ENCODE measurements at regions of chr10 and their contacts with region 1.

Region 1: DNA sequence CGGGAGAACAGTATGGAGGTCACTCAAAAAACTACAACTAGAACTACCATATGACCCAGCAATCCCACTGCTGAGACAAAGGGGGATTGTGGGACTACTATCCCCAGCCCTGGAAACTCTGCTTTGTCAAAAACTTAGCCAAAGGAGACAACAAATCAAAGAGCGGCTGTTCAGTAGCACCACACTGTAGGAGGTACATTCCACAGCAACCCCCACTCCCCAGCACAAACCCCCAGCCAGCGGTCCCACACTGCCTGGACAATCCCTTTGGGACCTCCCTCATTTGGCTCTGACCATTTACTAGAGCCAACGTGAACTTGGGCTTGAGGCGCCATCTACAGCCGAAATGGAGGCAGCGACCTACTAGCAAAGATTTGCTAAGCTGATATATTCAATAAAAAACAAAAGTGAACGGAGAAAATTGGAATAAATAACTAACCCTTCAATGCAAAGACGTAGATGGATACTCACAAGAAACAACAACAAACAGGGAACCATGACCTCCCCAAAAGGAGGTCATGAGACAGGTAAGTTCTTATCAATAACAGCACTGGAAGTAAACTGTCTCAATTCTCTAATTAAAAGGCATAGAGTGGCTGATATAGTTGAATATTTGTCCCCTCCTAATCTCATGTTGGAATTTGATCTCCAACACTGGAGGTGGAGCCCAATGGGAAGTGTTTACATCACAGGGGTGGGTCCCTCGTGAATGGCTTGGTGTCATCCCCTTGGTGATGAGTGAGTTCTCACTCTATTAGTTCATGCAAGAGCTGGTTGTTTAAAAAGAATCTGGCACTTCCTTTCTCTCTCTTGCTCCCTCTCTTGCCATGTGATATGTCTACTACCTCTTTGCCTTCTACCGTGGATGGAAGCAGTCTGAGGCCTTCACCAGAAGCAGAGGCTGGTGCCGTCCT is 119.0 kb upstream of the KCNMA1 start:
- DNase-seq: peak; percentile 98
- ATAC-seq: peak; percentile 97
- H3K4me3 ChIP-seq: no peak overlapping the region
- H3K27ac ChIP-seq: no peak overlapping the region
- H3K4me1 ChIP-seq: peaks cover 3% of the 10 kb centered on the region; the same call in 1 of the 2 replicates
- H3K27me3 ChIP-seq: no peaks in the 10 kb centered on the region
- CTCF ChIP-seq: peak; percentile 100

Region 2: GRCh38 chr10:77710759-77711682 is 45.6 kb before region 1 on chr10:
- CTCF ChIA-PET with region 1: interaction called, 30 read pairs
- POLR2A ChIA-PET with region 1: no interaction called
- intact Hi-C with region 1: loop called (anchors 1 kb)
- DNase-seq: peak; percentile 97
- ATAC-seq: peak; percentile 98
- H3K4me3 ChIP-seq: peak overlapping the region; percentile 57
- H3K27ac ChIP-seq: no peak overlapping the region
- H3K4me1 ChIP-seq: peaks cover 10% of the 10 kb centered on the region; the same call in 1 of the 2 replicates
- H3K27me3 ChIP-seq: no peaks in the 10 kb centered on the region
- CTCF ChIP-seq: peak; percentile 100

Region 3: DNA sequence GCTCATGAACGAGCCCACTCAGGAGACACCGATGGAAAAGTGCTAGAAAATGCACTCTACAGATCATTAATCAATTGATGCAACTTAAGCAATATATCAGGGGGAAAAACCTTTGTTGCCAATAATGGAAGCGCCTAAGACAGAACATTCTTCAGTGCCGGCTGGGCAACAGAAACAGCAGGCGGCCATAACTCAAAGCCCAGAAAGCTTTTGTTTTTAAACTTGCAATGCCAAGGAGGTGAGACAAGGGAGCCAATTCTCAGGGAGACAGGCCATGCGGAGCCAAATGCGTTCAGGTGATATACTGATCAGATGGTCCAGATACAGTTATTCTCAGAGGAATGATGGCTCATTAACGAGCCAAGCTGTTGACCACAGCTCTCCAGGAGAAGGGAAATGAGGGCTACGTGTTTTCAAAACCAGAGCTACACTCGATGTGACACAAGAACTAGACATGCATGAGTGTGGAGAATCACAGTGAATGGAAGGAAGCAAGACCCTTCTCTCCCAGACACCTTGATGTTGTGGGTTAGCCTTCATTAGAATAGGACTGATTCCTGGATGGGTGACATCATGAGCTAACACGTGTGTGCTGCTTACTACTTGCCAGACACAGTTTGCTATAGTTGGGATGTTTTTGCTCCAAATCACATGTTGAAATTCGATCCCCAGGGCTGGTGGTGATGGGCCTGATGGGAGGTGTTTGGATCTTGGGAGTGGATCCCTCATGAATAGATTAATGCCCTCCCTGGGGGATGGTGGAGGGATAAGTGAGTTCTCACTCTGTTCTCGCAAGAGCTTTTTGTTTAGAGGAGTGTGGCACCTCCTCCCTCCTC is 39.9 kb before region 1 on chr10:
- CTCF ChIA-PET with region 1: interaction called, 30 read pairs
- POLR2A ChIA-PET with region 1: interaction called, 32 read pairs
- intact Hi-C with region 1: loop called (anchors 1 kb)
- DNase-seq: no peak
- ATAC-seq: no peak
- H3K4me3 ChIP-seq: no peak overlapping the region
- H3K27ac ChIP-seq: no peak overlapping the region
- H3K4me1 ChIP-seq: peaks cover 6% of the 10 kb centered on the region; the same call in 1 of the 2 replicates
- H3K27me3 ChIP-seq: no peaks in the 10 kb centered on the region
- CTCF ChIP-seq: no peak

Region 4: GRCh38 chr10:77737608-77738007 is 19.0 kb before region 1 on chr10:
- CTCF ChIA-PET with region 1: interaction called, 11 read pairs
- POLR2A ChIA-PET with region 1: no interaction called
- intact Hi-C with region 1: no loop called
- DNase-seq: peak; percentile 99
- ATAC-seq: peak; percentile 91
- H3K4me3 ChIP-seq: no peak overlapping the region
- H3K27ac ChIP-seq: peak overlapping the region; percentile 34
- H3K4me1 ChIP-seq: peaks cover 13% of the 10 kb centered on the region
- H3K27me3 ChIP-seq: no peaks in the 10 kb centered on the region
- CTCF ChIP-seq: no peak

Measured in PC-3 (cell line).